GM23248 (cell line): ENCODE measurements at regions of chr12 and their contacts with region 1.

Region 1: GRCh38 chr12:107131832-107132616 is 38.7 kb upstream of the CRY1 start:
- DNase-seq: peak; percentile 80
- H3K4me3 ChIP-seq: no peak overlapping the region
- H3K27ac ChIP-seq: no peak overlapping the region
- H3K4me1 ChIP-seq: no peaks in the 10 kb centered on the region
- H3K27me3 ChIP-seq: no peaks in the 10 kb centered on the region

Region 2: GRCh38 chr12:107225635-107226034 is 93.6 kb after region 1 on chr12:
- in situ Hi-C with region 1: no loop called
- DNase-seq: peak; percentile 40
- H3K4me3 ChIP-seq: no peak overlapping the region
- H3K27ac ChIP-seq: no peak overlapping the region
- H3K4me1 ChIP-seq: peaks cover 8% of the 10 kb centered on the region; the same call in 1 of the 2 replicates
- H3K27me3 ChIP-seq: peaks cover 21% of the 10 kb centered on the region

Region 3: DNA sequence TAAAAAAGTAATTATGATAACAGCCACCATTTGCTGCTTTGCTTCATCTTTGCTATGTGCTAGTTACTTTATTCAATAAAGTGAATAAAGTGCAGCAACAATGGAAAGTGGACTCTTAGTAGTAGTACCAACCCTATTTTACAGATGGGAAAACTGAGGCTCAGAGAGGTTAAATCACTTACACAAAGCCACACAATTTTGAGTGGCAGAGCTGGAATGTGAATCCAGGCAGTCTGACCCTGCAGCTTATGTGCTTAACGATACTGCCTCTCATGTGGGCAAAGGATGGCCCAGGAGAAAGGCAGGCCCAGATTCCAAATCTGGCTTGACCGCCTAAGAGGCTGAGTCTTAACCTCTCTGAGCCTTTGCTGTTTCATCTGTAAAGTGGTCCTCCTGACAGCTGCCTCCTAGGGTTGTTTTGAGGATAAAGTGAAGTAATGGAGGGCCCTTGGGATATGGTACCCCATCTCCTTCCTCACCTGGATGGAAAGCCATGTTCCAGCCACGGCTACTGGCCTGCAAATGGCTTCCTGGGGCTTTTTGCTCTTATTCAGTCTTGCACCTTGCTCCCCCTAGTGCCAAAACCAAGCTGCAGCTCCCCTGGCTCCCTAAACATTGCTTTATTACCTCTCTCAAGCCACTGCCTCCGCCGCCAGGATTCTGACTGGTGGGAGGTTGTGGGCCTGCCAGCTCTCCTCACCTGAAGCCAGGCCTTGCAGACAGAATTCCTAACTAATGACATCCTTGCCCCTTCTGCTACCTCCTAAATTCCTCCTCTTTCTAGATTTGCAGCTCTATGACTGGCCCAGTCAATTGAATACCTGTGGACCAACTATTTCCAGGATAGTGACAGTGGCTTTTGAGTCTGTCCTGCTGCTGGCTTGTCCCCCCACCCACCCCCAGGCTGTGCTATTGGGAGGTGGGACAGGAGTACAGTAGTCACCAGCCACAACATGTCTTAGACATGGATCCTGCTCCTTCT is 270.3 kb after region 1 on chr12:
- in situ Hi-C with region 1: loop called (anchors 10 kb)
- DNase-seq: peak; percentile 78
- H3K4me3 ChIP-seq: no peak overlapping the region
- H3K27ac ChIP-seq: no peak overlapping the region
- H3K4me1 ChIP-seq: peaks cover 8% of the 10 kb centered on the region
- H3K27me3 ChIP-seq: no peaks in the 10 kb centered on the region

Region 4: GRCh38 chr12:107600581-107601144 is 468.6 kb after region 1 on chr12:
- in situ Hi-C with region 1: loop called (anchors 5 kb)
- DNase-seq: no peak
- H3K4me3 ChIP-seq: no peak overlapping the region
- H3K27ac ChIP-seq: no peak overlapping the region
- H3K4me1 ChIP-seq: no peaks in the 10 kb centered on the region
- H3K27me3 ChIP-seq: no peaks in the 10 kb centered on the region